ENCODE measurements at regions of chr17 and their contacts with region 1.

Region 1: DNA sequence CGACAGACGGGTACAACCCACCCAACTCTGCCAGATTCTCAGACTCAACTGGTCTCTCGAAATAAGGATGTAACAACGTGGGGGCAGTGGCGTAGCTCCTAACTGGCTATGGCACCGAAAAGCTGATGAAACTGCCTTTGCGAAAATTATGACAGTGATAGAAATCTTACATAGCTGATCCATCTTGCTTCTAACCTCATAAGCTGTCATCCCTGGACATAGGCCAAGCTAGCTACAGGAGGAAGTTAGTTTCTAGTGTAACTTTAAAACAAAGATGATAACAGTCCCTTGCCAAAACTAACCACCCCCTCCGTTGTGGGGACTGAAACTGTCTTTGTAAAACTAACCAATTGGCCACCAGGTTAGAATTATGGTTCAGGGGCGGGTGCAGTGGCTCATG is 220.1 kb downstream of the SLC39A11 start:
- DNase-seq: no peak
- H3K4me3 ChIP-seq: no peak overlapping the region
- H3K27ac ChIP-seq: no peak overlapping the region
- H3K4me1 ChIP-seq: no peaks in the 10 kb centered on the region
- H3K27me3 ChIP-seq: no peaks in the 10 kb centered on the region

Region 2: DNA sequence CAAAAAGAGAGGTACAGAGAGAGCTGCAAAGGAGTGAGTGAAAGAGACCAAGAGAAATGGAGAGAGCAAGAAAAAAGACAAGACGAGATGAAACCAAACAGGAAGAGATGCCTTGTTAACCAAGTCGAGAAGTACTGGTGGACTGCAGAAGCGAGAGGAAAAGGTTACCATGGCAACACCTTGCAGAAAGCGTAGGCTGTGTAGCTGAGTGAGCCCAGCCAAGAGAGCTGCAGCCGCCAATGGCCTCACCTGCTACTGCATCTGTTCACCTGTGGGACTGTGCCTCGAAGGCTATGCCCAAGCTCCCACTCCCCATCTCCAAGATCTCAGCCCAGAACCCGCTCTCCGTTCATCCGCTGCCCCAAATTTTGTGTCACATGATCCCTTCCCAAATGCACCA is 58.8 kb after region 1 on chr17:
- in situ Hi-C with region 1: loop called (anchors 10 kb)
- DNase-seq: no peak
- H3K4me3 ChIP-seq: no peak overlapping the region
- H3K27ac ChIP-seq: no peak overlapping the region
- H3K4me1 ChIP-seq: no peaks in the 10 kb centered on the region
- H3K27me3 ChIP-seq: no peaks in the 10 kb centered on the region

Measured in GM23248 (cell line).